ENCODE measurements at regions of chr20 and their contacts with region 1.

Region 1: GRCh38 chr20:51326201-51326819 is 216.2 kb downstream of the NFATC2 start:
- DNase-seq: peak; percentile 42
- H3K4me3 Mint-ChIP-seq: no peak overlapping the region
- H3K27ac Mint-ChIP-seq: no peak overlapping the region
- H3K4me1 Mint-ChIP-seq: no peaks in the 10 kb centered on the region
- H3K27me3 Mint-ChIP-seq: peaks cover 16% of the 10 kb centered on the region

Region 2: DNA sequence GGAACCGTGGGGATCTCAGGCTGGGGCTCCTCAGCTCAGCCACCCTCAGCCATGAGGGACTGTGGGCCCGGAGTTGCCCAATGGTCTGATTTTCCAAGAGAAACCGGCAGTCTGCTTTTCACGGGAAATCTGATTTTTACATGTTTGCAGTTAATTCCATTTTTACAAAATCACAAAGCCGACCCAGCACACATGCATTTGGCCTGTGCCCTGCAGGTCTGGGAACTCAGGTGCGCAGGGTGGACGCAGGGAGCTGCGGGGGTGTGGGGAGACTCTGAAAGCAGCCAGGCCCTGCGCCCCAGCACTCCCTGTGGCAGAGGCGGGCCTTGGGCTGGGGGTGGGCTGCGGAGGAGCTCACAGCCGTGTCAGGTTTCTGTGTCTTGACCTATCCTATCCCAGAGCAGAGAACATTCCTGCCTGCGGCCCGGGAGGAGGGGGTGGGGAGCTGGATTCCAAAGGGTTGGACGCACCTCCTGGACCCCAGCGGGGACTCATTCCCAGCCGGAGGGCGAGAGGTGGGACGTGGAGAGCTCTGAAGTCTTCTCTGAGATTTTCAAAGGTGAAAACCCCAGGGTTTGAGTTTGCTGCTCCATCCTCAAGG is 455.6 kb before region 1 on chr20:
- CTCF ChIA-PET with region 1: no interaction called
- POLR2A ChIA-PET with region 1: no interaction called
- DNase-seq: no peak
- H3K4me3 Mint-ChIP-seq: no peak overlapping the region
- H3K27ac Mint-ChIP-seq: no peak overlapping the region
- H3K4me1 Mint-ChIP-seq: no peaks in the 10 kb centered on the region
- H3K27me3 Mint-ChIP-seq: no peaks in the 10 kb centered on the region

Region 3: GRCh38 chr20:50987592-50988210 is 338.6 kb before region 1 on chr20:
- CTCF ChIA-PET with region 1: interaction called, 43 read pairs
- POLR2A ChIA-PET with region 1: no interaction called
- DNase-seq: peak; percentile 54
- H3K4me3 Mint-ChIP-seq: no peak overlapping the region
- H3K27ac Mint-ChIP-seq: no peak overlapping the region
- H3K4me1 Mint-ChIP-seq: peaks cover 2% of the 10 kb centered on the region
- H3K27me3 Mint-ChIP-seq: peaks cover 27% of the 10 kb centered on the region

Region 4: GRCh38 chr20:51412333-51412871 is 86.1 kb after region 1 on chr20:
- CTCF ChIA-PET with region 1: no interaction called
- POLR2A ChIA-PET with region 1: no interaction called
- DNase-seq: no peak
- H3K4me3 Mint-ChIP-seq: no peak overlapping the region
- H3K27ac Mint-ChIP-seq: peak overlapping the region; percentile 81
- H3K4me1 Mint-ChIP-seq: peaks cover 91% of the 10 kb centered on the region
- H3K27me3 Mint-ChIP-seq: no peaks in the 10 kb centered on the region

Measured in activated CD4-positive, alpha-beta memory T cell treated with anti-CD3 and anti-CD28 coated beads, Interleukin-2, amount 10 ng/mL, durations not matched to agents 7 days and 5 days (primary cell).